ENCODE measurements at regions of chr2 and their contacts with region 1.

Region 1: DNA sequence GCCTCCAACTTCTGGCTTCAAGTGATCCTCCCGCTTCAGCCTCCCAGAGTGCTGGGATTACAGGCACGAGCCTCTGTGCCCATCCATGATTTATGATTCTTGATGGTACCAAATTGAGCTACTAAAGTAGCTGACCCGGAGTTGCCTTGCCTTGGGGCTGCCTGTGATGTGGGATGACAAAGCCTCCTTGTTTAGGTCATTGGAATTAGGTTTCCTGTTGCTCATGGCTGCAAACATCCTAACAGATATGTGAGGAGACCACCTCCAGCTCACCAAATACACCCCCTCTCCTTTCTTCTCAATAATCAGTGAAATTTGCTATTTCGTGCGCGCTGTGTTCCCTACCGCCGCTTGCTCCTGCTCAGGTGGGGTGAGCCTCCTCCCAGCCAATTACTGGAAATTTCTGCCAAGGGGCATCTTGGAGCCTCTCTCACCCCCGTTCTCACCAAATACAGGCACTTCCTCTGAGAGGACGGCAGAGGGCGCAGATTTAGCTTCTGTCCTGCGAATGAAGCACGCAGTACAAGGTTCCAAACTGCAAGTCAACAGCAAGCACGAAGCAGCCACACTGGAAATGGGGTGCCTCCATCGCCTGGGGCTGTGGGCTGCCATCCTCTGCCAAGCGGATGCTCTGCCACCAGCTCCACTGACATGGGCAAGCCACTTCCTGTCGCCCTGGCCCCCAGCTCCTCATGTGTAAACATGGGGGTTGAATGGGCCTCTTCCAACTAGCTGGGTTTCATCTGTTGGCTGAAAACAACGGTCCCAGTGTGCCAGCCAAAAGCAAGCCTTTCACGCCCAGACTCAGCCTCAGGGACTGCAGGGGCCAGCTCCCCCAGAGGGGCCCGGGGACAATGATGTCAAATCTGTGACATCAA is 71.7 kb downstream of the NCAPH start:
- DNase-seq: peak; percentile 74
- H3K4me3 Mint-ChIP-seq: no peak overlapping the region
- H3K27ac Mint-ChIP-seq: peak overlapping the region; percentile 79
- H3K4me1 Mint-ChIP-seq: peaks cover 50% of the 10 kb centered on the region
- H3K27me3 Mint-ChIP-seq: no peaks in the 10 kb centered on the region
- CTCF ChIP-seq: peak; percentile 76

Region 2: GRCh38 chr2:96427917-96428316 is 20.6 kb after region 1 on chr2:
- CTCF ChIA-PET with region 1: interaction called, 12 read pairs
- intact Hi-C with region 1: loop called (anchors 2 kb)
- DNase-seq: peak; percentile 96
- H3K4me3 Mint-ChIP-seq: peak overlapping the region; percentile 48
- H3K27ac Mint-ChIP-seq: peak overlapping the region; percentile 96
- H3K4me1 Mint-ChIP-seq: peaks cover 44% of the 10 kb centered on the region
- H3K27me3 Mint-ChIP-seq: no peaks in the 10 kb centered on the region
- CTCF ChIP-seq: no peak

Region 3: GRCh38 chr2:96470636-96471035 is 63.4 kb after region 1 on chr2:
- CTCF ChIA-PET with region 1: interaction called, 3 read pairs
- intact Hi-C with region 1: loop called (anchors 2 kb)
- DNase-seq: peak; percentile 84
- H3K4me3 Mint-ChIP-seq: peak overlapping the region; percentile 18
- H3K27ac Mint-ChIP-seq: no peak overlapping the region
- H3K4me1 Mint-ChIP-seq: peaks cover 11% of the 10 kb centered on the region
- H3K27me3 Mint-ChIP-seq: no peaks in the 10 kb centered on the region
- CTCF ChIP-seq: peak; percentile 89

Region 4: GRCh38 chr2:96485751-96486651 is 78.7 kb after region 1 on chr2:
- CTCF ChIA-PET with region 1: no interaction called
- intact Hi-C with region 1: loop called (anchors 5 kb)
- DNase-seq: peak; percentile 74
- H3K4me3 Mint-ChIP-seq: peak overlapping the region; percentile 62
- H3K27ac Mint-ChIP-seq: peak overlapping the region; percentile 73
- H3K4me1 Mint-ChIP-seq: peaks cover 29% of the 10 kb centered on the region
- H3K27me3 Mint-ChIP-seq: no peaks in the 10 kb centered on the region
- CTCF ChIP-seq: no peak

Region 5: GRCh38 chr2:96509114-96509846 is 102.0 kb after region 1 on chr2:
- CTCF ChIA-PET with region 1: interaction called, 101 read pairs
- intact Hi-C with region 1: loop called (anchors 1 kb)
- DNase-seq: peak; percentile 95
- H3K4me3 Mint-ChIP-seq: peak overlapping the region; percentile 7
- H3K27ac Mint-ChIP-seq: no peak overlapping the region
- H3K4me1 Mint-ChIP-seq: peaks cover 50% of the 10 kb centered on the region
- H3K27me3 Mint-ChIP-seq: peaks cover 13% of the 10 kb centered on the region
- CTCF ChIP-seq: peak; percentile 93

Measured in Calu3 (cell line).